Caco-2 (cell line): ENCODE measurements at regions of chr2 and their contacts with region 1.

Region 1: GRCh38 chr2:30273261-30273861 is 42.0 kb downstream of the LBH start:
- DNase-seq: peak; percentile 57 to 59
- H3K4me3 ChIP-seq: no peak overlapping the region
- H3K4me3 Mint-ChIP-seq: peak overlapping the region; percentile 57
- H3K27ac Mint-ChIP-seq: peak overlapping the region; percentile 94
- H3K4me1 ChIP-seq: peaks cover 45% of the 10 kb centered on the region
- H3K4me1 Mint-ChIP-seq: peaks cover 33% of the 10 kb centered on the region
- H3K27me3 ChIP-seq: no peaks in the 10 kb centered on the region
- H3K27me3 Mint-ChIP-seq: no peaks in the 10 kb centered on the region
- CTCF ChIP-seq: no peak

Region 2: DNA sequence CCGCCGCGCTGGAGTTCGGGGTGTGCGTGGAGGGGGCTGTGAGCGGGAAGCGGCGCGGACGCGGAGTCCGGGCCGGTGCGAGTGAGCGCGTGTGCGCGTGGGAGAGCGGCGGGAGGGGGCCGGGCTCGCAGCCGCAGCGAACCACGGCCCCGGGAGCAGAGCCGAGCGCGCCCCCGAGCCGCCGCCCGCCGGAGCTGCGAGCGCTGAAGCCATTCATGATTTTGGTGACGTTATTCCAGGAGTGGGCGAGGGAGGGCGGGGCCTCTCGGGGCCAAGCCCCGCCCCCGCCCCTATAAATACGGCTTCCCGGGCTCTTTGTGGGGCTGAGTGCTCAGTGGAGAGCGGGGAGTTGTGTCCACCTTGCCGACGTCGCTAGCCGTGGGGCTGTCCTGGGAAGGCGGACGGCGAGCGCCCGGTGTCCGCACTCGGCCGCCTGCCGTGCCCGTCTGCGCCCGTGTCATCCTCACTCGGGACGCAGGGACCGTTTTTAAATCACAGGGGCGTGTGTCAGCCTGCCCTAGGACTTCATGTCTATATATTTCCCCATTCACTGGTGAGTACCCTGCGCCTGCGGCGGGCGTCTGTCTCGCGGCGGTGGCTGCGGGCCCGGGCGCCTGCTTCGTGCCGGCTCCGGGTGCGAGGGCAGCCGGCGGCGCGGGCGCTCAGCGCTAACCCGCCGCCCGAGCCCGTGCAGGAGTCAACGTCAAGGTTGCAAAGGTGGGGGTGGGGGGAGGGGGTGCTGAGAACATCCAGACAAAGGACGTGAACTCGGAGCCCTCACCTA is 42.0 kb before region 1 on chr2 and contains the start of gene LBH:
- CTCF ChIA-PET with region 1: no interaction called
- POLR2A ChIA-PET with region 1: interaction called, 7 read pairs
- intact Hi-C with region 1: loop called (anchors 1 kb)
- DNase-seq: peak; percentile 87 to 91
- H3K4me3 ChIP-seq: peak within 1 kb of the TSS; percentile 60
- H3K4me3 Mint-ChIP-seq: peak within 1 kb of the TSS; percentile 94
- H3K27ac Mint-ChIP-seq: peak within 1 kb of the TSS; percentile 67
- H3K4me1 ChIP-seq: peaks cover 28% of the 10 kb centered on the region
- H3K4me1 Mint-ChIP-seq: peaks cover 30% of the 10 kb centered on the region
- H3K27me3 ChIP-seq: no peaks in the 10 kb centered on the region
- H3K27me3 Mint-ChIP-seq: no peaks in the 10 kb centered on the region
- CTCF ChIP-seq: peak in 1 of 2 experiments; percentile 10
- total RNA-seq, gene LBH: 126 and 159 TPM in 2 replicates

Region 3: DNA sequence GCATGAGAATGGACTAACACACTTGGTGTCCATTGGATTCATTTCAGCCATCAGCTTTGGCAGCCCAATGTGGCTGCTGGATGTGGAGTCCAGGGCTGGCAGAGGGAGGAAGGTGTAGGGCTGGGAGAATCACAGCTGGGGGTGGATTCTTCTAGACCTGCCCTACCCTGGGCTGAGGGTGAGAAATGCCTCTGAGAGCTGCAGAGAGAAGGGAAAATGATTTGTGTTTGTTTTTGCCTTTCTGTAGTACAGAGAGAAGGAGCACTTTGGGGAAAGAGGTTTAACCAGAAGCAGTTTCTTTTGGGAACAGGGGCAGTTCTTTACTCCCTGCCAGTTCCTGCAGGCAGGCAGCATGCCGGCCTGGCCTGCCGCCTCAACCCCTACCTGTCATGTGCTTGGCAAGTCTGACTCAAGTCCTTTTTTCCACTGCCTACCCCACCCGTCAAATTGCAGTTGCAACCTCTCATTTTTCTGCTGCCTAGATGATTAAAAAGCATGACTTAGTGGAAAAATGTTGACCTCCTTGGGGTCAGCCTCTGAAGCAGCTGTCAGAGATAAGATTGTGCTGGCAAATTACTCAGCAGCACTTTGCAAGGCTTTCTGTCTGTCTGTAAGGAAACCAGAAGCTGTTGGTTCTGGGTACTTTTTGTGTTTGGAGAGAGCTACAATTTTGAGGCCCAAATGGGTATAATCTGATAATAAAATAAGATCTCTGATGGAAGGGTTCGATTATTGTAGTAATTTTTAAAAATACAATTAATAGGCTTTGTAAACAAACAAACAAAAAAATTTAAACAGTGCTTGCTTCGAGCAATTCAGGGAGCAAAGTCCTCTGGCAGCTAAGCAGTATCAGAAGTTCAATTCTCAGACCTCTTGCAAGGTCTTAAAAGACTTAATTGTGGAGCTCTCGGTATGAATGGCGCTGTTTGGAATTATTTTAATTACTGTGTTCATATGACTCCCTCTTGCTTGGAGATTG is 20.3 kb before region 1 on chr2:
- CTCF ChIA-PET with region 1: no interaction called
- POLR2A ChIA-PET with region 1: interaction called, 3 read pairs
- intact Hi-C with region 1: loop called (anchors 1 kb)
- DNase-seq: peak; percentile 81 to 84
- H3K4me3 ChIP-seq: no peak overlapping the region
- H3K4me3 Mint-ChIP-seq: peak overlapping the region; percentile 64
- H3K27ac Mint-ChIP-seq: peak overlapping the region; percentile 82
- H3K4me1 ChIP-seq: peaks cover 46% of the 10 kb centered on the region
- H3K4me1 Mint-ChIP-seq: peaks cover 40% of the 10 kb centered on the region
- H3K27me3 ChIP-seq: no peaks in the 10 kb centered on the region
- H3K27me3 Mint-ChIP-seq: no peaks in the 10 kb centered on the region
- CTCF ChIP-seq: no peak

Region 4: DNA sequence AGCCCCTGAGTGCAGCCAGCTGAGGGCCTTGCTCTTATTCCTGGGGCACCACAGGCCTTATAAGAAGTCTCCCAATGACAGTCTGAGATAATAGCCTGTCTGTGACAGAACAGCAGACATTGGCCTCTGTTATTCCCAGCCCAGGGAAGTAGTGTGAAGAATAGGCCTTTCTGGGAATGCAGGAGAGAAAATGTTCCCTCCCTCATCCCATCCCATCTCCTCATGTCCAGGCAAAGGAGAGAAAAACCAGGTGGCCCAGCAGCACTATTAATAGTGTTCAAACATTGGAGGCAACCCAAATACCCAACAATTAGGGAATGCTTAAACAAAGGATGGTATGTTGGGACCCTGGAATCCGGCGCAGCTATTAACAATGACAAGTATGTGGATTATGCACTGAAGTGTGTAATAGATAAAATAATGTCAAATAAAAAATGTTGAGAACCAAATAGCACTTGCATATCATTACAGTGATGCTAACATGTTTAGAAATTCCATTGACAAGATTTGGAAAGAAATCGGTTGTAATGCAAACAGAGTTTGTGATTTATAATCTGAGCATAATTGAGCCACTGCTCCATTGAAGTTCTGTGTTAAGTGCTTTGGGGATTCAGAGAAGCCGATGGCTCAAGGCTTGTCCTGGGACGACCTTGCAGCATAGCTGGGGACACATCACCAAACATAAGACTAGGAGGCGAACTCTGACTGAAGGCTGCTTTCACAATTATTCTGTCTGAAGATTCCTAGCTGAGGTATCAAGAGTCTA is 27.3 kb after region 1 on chr2:
- CTCF ChIA-PET with region 1: no interaction called
- POLR2A ChIA-PET with region 1: no interaction called
- intact Hi-C with region 1: loop called (anchors 1 kb)
- DNase-seq: peak; percentile 48 to 56
- H3K4me3 ChIP-seq: no peak overlapping the region
- H3K4me3 Mint-ChIP-seq: no peak overlapping the region
- H3K27ac Mint-ChIP-seq: peak overlapping the region; percentile 39
- H3K4me1 ChIP-seq: peaks cover 19% of the 10 kb centered on the region
- H3K4me1 Mint-ChIP-seq: peaks cover 13% of the 10 kb centered on the region
- H3K27me3 ChIP-seq: no peaks in the 10 kb centered on the region
- H3K27me3 Mint-ChIP-seq: no peaks in the 10 kb centered on the region
- CTCF ChIP-seq: no peak